ENCODE measurements at regions of chr15 and their contacts with region 1.

Region 1: GRCh38 chr15:78265752-78266593 is 1.6 kb downstream of the DNAJA4 start:
- DNase-seq: peak in 1 of 35 experiments; percentile 15
- ATAC-seq: no peak
- H3K4me3 ChIP-seq: peak overlapping the region in 1 of 2 donors; percentile 74
- H3K4me3 Mint-ChIP-seq: peak overlapping the region; percentile 76 to 86 (median 83)
- H3K27ac ChIP-seq: peak overlapping the region; percentile 74
- H3K27ac Mint-ChIP-seq: peak overlapping the region; percentile 85 to 88
- H3K4me1 ChIP-seq: peaks cover 10 to 23% of the 10 kb centered on the region in 2 experiments
- H3K4me1 Mint-ChIP-seq: peaks cover 33 to 36% (median 36%) of the 10 kb centered on the region in 3 donors
- H3K27me3 ChIP-seq: no peaks in the 10 kb centered on the region
- H3K27me3 Mint-ChIP-seq: no peaks in the 10 kb centered on the region

Region 2: GRCh38 chr15:77959432-77959879 is 306.5 kb before region 1 on chr15:
- CTCF ChIA-PET with region 1: no interaction called
- POLR2A ChIA-PET with region 1: interaction called in 1 of 2 experiments, 14 read pairs
- DNase-seq: peak; percentile 15 to 77 (median 62)
- ATAC-seq: peak; percentile 93 to 99 (median 96)
- H3K4me3 ChIP-seq: no peak overlapping the region
- H3K4me3 Mint-ChIP-seq: peak overlapping the region in 1 of 3 donors; percentile 21
- H3K27ac ChIP-seq: no peak overlapping the region
- H3K27ac Mint-ChIP-seq: no peak overlapping the region
- H3K4me1 ChIP-seq: peaks cover 0 to 5% of the 10 kb centered on the region in 2 experiments
- H3K4me1 Mint-ChIP-seq: peaks cover 1 to 7% (median 5%) of the 10 kb centered on the region in 3 donors
- H3K27me3 ChIP-seq: peaks cover 0 to 6% of the 10 kb centered on the region in 2 experiments
- H3K27me3 Mint-ChIP-seq: peaks cover 0 to 9% of the 10 kb centered on the region in 2 donors

Measured in T-cell (primary cell).